ENCODE measurements at regions of chr12 and their contacts with region 1.

Region 1: GRCh38 chr12:59603754-59604153 is 7.9 kb downstream of the SLC16A7 start:
- DNase-seq: no peak
- H3K4me3 Mint-ChIP-seq: no peak overlapping the region
- H3K27ac Mint-ChIP-seq: no peak overlapping the region
- H3K4me1 Mint-ChIP-seq: peaks cover 66% of the 10 kb centered on the region
- H3K27me3 Mint-ChIP-seq: no peaks in the 10 kb centered on the region

Region 2: GRCh38 chr12:59619461-59620240 is 15.9 kb after region 1 on chr12:
- CTCF ChIA-PET with region 1: no interaction called
- intact Hi-C with region 1: loop called (anchors 2 kb)
- DNase-seq: no peak
- H3K4me3 Mint-ChIP-seq: no peak overlapping the region
- H3K27ac Mint-ChIP-seq: no peak overlapping the region
- H3K4me1 Mint-ChIP-seq: peaks cover 50% of the 10 kb centered on the region
- H3K27me3 Mint-ChIP-seq: no peaks in the 10 kb centered on the region